ENCODE measurements at regions of chr1 and their contacts with region 1.

Region 1: GRCh38 chr1:9494929-9495758 is 44.1 kb upstream of the SLC25A33 start:
- DNase-seq: peak; percentile 56
- H3K4me3 Mint-ChIP-seq: peak overlapping the region; percentile 51
- H3K27ac Mint-ChIP-seq: peak overlapping the region; percentile 17
- H3K4me1 Mint-ChIP-seq: peaks cover 13% of the 10 kb centered on the region
- H3K27me3 Mint-ChIP-seq: peaks cover 20% of the 10 kb centered on the region

Region 2: DNA sequence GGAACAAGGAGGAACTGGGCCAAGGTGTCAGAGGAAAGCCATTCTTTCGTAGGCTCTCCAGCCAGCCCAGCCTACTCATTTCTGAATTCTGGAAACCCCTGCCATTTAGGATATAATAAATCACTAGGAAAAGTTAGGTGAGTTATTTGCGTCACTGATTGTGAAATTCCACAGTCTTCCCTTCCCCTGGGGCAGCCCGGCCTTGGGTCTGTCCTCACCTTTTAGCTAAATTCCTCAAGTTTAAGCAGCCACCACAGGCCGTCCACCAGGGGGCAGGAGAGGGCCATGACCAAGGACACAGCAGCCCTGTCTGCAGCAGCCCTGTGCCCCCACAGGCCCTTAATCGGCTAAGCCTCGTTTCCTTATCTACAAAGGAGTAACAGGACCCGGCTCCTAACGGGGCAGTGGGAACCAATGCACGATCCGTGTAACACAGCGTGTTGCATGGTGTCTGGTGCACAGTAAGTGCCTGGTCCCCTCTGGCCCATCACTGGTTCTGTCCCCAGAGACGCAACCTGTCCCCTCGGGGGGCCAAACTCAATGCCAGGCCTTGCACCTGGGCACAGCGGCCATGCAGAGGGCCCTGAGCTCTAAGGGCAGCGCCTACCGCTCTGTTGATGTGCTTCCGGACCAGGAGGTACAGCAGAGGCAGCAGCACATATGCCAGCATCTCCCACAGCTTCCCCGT is 384.3 kb before region 1 on chr1:
- intact Hi-C with region 1: loop called (anchors 5 kb)
- DNase-seq: peak; percentile 70
- H3K4me3 Mint-ChIP-seq: no peak overlapping the region
- H3K27ac Mint-ChIP-seq: no peak overlapping the region
- H3K4me1 Mint-ChIP-seq: peaks cover 14% of the 10 kb centered on the region
- H3K27me3 Mint-ChIP-seq: no peaks in the 10 kb centered on the region

Region 3: GRCh38 chr1:9267352-9267686 is 227.8 kb before region 1 on chr1:
- intact Hi-C with region 1: loop called (anchors 1 kb)
- DNase-seq: no peak
- H3K4me3 Mint-ChIP-seq: no peak overlapping the region
- H3K27ac Mint-ChIP-seq: no peak overlapping the region
- H3K4me1 Mint-ChIP-seq: peaks cover 5% of the 10 kb centered on the region
- H3K27me3 Mint-ChIP-seq: no peaks in the 10 kb centered on the region

Region 4: DNA sequence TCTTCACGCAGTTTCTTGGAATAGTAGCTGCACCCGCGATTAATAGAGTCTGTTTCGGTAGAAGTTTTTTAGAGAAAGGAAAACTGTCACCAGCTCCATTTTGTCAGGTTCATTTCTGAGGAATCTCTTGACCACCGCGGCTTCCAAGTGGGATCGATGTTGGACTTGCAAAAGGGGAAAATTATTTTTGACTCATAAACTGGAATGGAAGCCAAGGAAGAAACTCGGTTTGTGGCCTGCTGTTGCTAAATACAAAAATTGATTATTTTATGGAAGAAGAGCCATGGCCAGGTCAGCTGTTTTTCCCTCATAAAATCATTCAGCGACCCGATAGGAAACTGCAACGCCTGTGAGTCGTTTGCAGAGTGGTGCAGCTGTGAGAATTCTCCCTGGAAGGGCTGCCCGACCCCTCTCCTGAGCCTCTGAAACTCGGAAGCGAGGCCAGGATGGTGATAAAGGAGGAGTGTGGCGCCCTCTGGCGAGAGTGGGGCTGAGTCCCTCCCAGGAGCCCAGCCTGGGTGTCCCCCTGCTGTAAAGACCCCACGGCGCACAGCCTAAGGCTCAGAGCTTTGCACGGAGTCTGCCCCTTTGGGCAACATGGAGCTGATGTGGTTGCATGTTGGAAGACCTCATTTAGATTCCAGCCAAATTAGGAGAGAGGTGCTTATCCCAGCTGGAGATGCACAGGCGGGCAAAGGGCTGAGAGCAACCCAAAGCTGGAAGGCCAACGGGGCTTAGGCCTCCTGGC is 39.5 kb before region 1 on chr1:
- intact Hi-C with region 1: loop called (anchors 2 kb)
- DNase-seq: peak; percentile 37
- H3K4me3 Mint-ChIP-seq: no peak overlapping the region
- H3K27ac Mint-ChIP-seq: no peak overlapping the region
- H3K4me1 Mint-ChIP-seq: no peaks in the 10 kb centered on the region
- H3K27me3 Mint-ChIP-seq: peaks cover 9% of the 10 kb centered on the region

Region 5: GRCh38 chr1:9573723-9574122 is 78.6 kb after region 1 on chr1:
- intact Hi-C with region 1: loop called (anchors 5 kb)
- DNase-seq: no peak
- H3K4me3 Mint-ChIP-seq: no peak overlapping the region
- H3K27ac Mint-ChIP-seq: no peak overlapping the region
- H3K4me1 Mint-ChIP-seq: no peaks in the 10 kb centered on the region
- H3K27me3 Mint-ChIP-seq: no peaks in the 10 kb centered on the region

Region 6: GRCh38 chr1:10045480-10046355 is 550.6 kb after region 1 on chr1:
- intact Hi-C with region 1: no loop called
- DNase-seq: no peak
- H3K4me3 Mint-ChIP-seq: no peak overlapping the region
- H3K27ac Mint-ChIP-seq: no peak overlapping the region
- H3K4me1 Mint-ChIP-seq: no peaks in the 10 kb centered on the region
- H3K27me3 Mint-ChIP-seq: no peaks in the 10 kb centered on the region